CD8-positive, alpha-beta T cell (primary cell): ENCODE measurements at regions of chr3 and their contacts with region 1.

Region 1: GRCh38 chr3:151838583-151839312 is 24.8 kb downstream of the AADAC start:
- DNase-seq: peak in 5 of 9 experiments; percentile 2 to 63 (median 30)
- ATAC-seq: peak; percentile 49
- H3K4me3 ChIP-seq: no peak overlapping the region
- H3K4me3 Mint-ChIP-seq: no peak overlapping the region
- H3K27ac ChIP-seq: no peak overlapping the region
- H3K27ac Mint-ChIP-seq: no peak overlapping the region
- H3K4me1 ChIP-seq: no peaks in the 10 kb centered on the region
- H3K4me1 Mint-ChIP-seq: no peaks in the 10 kb centered on the region
- H3K27me3 ChIP-seq: peaks cover 0 to 2% of the 10 kb centered on the region in 2 experiments
- H3K27me3 Mint-ChIP-seq: peaks cover 9% of the 10 kb centered on the region
- CTCF ChIP-seq: peak; percentile 59

Region 2: GRCh38 chr3:151156618-151157216 is 682.0 kb before region 1 on chr3:
- CTCF ChIA-PET with region 1: no interaction called
- POLR2A ChIA-PET with region 1: no interaction called
- intact Hi-C with region 1: loop called in 1 of 2 experiments (anchors 5 kb)
- DNase-seq: peak in 3 of 9 experiments; percentile 34 to 73 (median 65)
- ATAC-seq: peak; percentile 69
- H3K4me3 ChIP-seq: no peak overlapping the region
- H3K4me3 Mint-ChIP-seq: no peak overlapping the region
- H3K27ac ChIP-seq: no peak overlapping the region
- H3K27ac Mint-ChIP-seq: no peak overlapping the region
- H3K4me1 ChIP-seq: no peaks in the 10 kb centered on the region
- H3K4me1 Mint-ChIP-seq: no peaks in the 10 kb centered on the region
- H3K27me3 ChIP-seq: no peaks in the 10 kb centered on the region
- H3K27me3 Mint-ChIP-seq: peaks cover 5% of the 10 kb centered on the region
- CTCF ChIP-seq: peak; percentile 78

Region 3: GRCh38 chr3:151775314-151776258 is 63.2 kb before region 1 on chr3:
- CTCF ChIA-PET with region 1: no interaction called
- POLR2A ChIA-PET with region 1: no interaction called
- intact Hi-C with region 1: no loop called
- DNase-seq: no peak
- ATAC-seq: no peak
- H3K4me3 ChIP-seq: no peak overlapping the region
- H3K4me3 Mint-ChIP-seq: no peak overlapping the region
- H3K27ac ChIP-seq: no peak overlapping the region
- H3K27ac Mint-ChIP-seq: no peak overlapping the region
- H3K4me1 ChIP-seq: no peaks in the 10 kb centered on the region
- H3K4me1 Mint-ChIP-seq: no peaks in the 10 kb centered on the region
- H3K27me3 ChIP-seq: no peaks in the 10 kb centered on the region
- H3K27me3 Mint-ChIP-seq: peaks cover 4% of the 10 kb centered on the region
- CTCF ChIP-seq: no peak

Region 4: GRCh38 chr3:151863611-151864010 is 24.9 kb after region 1 on chr3:
- CTCF ChIA-PET with region 1: no interaction called
- POLR2A ChIA-PET with region 1: no interaction called
- intact Hi-C with region 1: no loop called
- DNase-seq: no peak
- ATAC-seq: no peak
- H3K4me3 ChIP-seq: no peak overlapping the region
- H3K4me3 Mint-ChIP-seq: no peak overlapping the region
- H3K27ac ChIP-seq: no peak overlapping the region
- H3K27ac Mint-ChIP-seq: no peak overlapping the region
- H3K4me1 ChIP-seq: no peaks in the 10 kb centered on the region
- H3K4me1 Mint-ChIP-seq: no peaks in the 10 kb centered on the region
- H3K27me3 ChIP-seq: no peaks in the 10 kb centered on the region
- H3K27me3 Mint-ChIP-seq: no peaks in the 10 kb centered on the region
- CTCF ChIP-seq: no peak